Naive thymus-derived CD4-positive, alpha-beta T cell (primary cell): ENCODE measurements at regions of chr19 and their contacts with region 1.

Region 1: GRCh38 chr19:48468775-48469288 is 337 bp upstream of the CYTH2 start:
- DNase-seq: peak; percentile 93 to 100 (median 100)
- ATAC-seq: peak; percentile 93
- H3K4me3 ChIP-seq: peak overlapping the region; percentile 93
- H3K4me3 Mint-ChIP-seq: peak overlapping the region; percentile 81 to 96 (median 92)
- H3K27ac ChIP-seq: peak overlapping the region; percentile 86
- H3K27ac Mint-ChIP-seq: peak overlapping the region; percentile 85 to 96 (median 90)
- H3K4me1 ChIP-seq: peaks cover 7 to 15% of the 10 kb centered on the region in 2 donors
- H3K4me1 Mint-ChIP-seq: peaks cover 0 to 30% (median 18%) of the 10 kb centered on the region in 7 donors
- H3K27me3 ChIP-seq: no peaks in the 10 kb centered on the region
- H3K27me3 Mint-ChIP-seq: no peaks in the 10 kb centered on the region

Region 2: DNA sequence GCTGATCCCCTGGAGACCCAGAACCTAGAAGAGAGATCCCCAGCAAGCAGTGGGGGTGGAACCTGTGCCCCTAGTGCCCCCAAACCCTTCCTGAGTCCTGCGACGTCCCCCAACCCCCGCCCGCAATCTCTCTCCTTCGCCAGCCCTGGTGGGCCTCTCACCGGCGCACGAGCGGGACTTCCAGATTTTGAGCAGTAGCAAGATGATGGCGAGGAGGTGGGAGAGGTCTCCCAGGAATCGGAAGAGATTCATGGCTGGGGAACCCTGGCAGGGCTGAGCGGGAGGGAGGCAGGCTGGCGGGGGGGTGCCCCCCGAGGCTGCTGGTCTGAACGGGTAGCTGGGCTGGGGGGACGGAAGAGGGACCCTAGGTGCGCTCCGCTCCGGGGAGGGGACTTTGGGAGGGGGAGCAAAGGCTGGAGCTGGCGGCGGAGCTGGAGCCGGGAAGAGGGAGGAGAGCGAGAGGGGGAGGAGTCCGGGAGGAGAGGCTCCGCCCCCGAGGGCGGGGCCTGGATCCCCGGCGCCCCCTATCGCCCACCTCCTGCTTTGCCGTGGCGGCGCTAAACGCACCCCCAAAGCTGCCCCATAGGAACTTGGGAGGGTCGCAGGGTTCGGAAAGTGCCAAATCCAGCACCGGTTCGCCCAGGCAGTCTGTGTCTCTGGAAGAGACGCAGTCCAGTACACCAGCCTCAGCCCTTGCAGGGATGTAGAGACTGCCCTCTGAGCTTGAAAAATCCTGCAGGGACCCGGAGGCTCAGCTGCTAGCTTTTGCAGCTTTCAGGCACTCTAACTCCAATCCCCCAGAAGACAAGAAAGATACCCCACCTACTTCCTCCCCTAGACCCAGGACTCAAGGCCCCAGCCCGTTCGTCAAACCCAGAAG is 77.5 kb before region 1 on chr19 and contains the start of gene KDELR1:
- CTCF ChIA-PET with region 1: no interaction called
- POLR2A ChIA-PET with region 1: interaction called, 4 read pairs
- intact Hi-C with region 1: loop called in 1 of 2 experiments (anchors 2 kb)
- DNase-seq: peak; percentile 55 to 89 (median 72)
- ATAC-seq: peak; percentile 92
- H3K4me3 ChIP-seq: peak within 1 kb of the TSS; percentile 96
- H3K4me3 Mint-ChIP-seq: peak within 1 kb of the TSS; percentile 84 to 95 (median 92)
- H3K27ac ChIP-seq: peak within 1 kb of the TSS; percentile 92
- H3K27ac Mint-ChIP-seq: peak within 1 kb of the TSS; percentile 78 to 97 (median 93)
- H3K4me1 ChIP-seq: peaks cover 15 to 32% of the 10 kb centered on the region in 2 donors
- H3K4me1 Mint-ChIP-seq: peaks cover 5 to 46% (median 36%) of the 10 kb centered on the region in 7 donors
- H3K27me3 ChIP-seq: peaks cover 9 to 21% of the 10 kb centered on the region in 2 donors
- H3K27me3 Mint-ChIP-seq: peaks cover 9 to 42% (median 21%) of the 10 kb centered on the region in 5 donors
- total RNA-seq, gene KDELR1: 42.7 to 73.9 (median 52.3) TPM

Region 3: DNA sequence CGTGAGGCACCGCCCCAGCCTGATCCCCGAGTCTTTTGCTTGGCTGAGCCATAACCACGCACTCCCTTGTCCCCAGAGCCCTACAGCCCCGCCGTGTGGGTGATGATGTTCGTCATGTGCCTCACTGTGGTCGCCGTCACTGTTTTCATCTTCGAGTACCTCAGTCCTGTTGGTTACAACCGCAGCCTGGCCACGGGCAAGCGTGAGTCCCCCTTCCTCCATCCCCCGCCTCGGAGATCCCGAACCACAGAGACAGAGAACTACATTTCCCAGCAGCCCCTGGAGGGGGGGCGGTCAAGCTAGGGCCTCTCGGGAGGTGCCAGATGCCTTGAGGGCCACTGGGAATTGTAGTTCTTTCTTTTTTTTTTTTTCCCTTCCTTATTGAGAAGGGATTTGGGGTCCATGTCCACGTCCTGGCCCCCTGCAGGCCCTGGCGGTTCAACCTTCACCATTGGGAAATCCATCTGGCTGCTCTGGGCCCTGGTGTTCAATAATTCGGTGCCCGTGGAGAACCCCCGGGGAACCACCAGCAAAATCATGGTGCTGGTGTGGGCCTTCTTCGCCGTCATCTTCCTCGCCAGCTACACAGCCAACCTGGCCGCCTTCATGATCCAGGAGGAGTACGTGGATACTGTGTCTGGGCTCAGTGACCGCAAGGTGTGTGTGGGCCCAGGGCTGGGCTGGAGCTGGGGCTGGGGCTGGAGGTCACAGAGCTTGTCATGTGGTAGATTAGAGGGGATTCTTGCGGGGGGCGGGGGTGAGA is 49.5 kb before region 1 on chr19:
- CTCF ChIA-PET with region 1: no interaction called
- POLR2A ChIA-PET with region 1: no interaction called
- intact Hi-C with region 1: loop called (anchors 2 kb)
- DNase-seq: peak; percentile 44 to 77 (median 64)
- ATAC-seq: peak; percentile 79
- H3K4me3 ChIP-seq: peak overlapping the region; percentile 15
- H3K4me3 Mint-ChIP-seq: peak overlapping the region; percentile 60 to 90 (median 80)
- H3K27ac ChIP-seq: no peak overlapping the region
- H3K27ac Mint-ChIP-seq: peak overlapping the region in 6 of 9 donors; percentile 6 to 93 (median 74)
- H3K4me1 ChIP-seq: peaks cover 0 to 5% of the 10 kb centered on the region in 2 donors
- H3K4me1 Mint-ChIP-seq: peaks cover 12 to 30% (median 22%) of the 10 kb centered on the region in 7 donors
- H3K27me3 ChIP-seq: no peaks in the 10 kb centered on the region
- H3K27me3 Mint-ChIP-seq: peaks cover 0 to 22% (median 5%) of the 10 kb centered on the region in 5 donors

Region 4: GRCh38 chr19:48492925-48493717 is 24.3 kb after region 1 on chr19:
- CTCF ChIA-PET with region 1: interaction called, 13 read pairs
- POLR2A ChIA-PET with region 1: interaction called, 4 read pairs
- intact Hi-C with region 1: loop called (anchors 1 kb)
- DNase-seq: peak; percentile 69 to 87 (median 78)
- ATAC-seq: peak; percentile 87
- H3K4me3 ChIP-seq: peak overlapping the region; percentile 41
- H3K4me3 Mint-ChIP-seq: peak overlapping the region; percentile 58 to 84 (median 72)
- H3K27ac ChIP-seq: no peak overlapping the region
- H3K27ac Mint-ChIP-seq: peak overlapping the region; percentile 20 to 86 (median 67)
- H3K4me1 ChIP-seq: peaks cover 4 to 25% of the 10 kb centered on the region in 2 donors
- H3K4me1 Mint-ChIP-seq: peaks cover 17 to 51% (median 43%) of the 10 kb centered on the region in 7 donors
- H3K27me3 ChIP-seq: no peaks in the 10 kb centered on the region
- H3K27me3 Mint-ChIP-seq: peaks cover 0 to 57% (median 6%) of the 10 kb centered on the region in 5 donors

Region 5: DNA sequence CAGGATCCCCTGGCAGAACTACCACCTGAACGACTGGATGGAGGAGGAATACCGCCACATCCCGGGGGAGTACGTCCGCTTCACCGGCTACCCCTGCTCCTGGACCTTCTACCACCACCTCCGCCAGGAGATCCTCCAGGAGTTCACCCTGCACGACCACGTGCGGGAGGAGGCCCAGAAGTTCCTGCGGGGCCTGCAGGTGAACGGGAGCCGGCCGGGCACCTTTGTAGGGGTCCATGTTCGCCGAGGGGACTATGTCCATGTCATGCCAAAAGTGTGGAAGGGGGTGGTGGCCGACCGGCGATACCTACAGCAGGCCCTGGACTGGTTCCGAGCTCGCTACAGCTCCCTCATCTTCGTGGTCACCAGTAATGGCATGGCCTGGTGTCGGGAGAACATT is 234.5 kb after region 1 on chr19:
- CTCF ChIA-PET with region 1: no interaction called
- POLR2A ChIA-PET with region 1: no interaction called
- intact Hi-C with region 1: no loop called
- DNase-seq: no peak
- ATAC-seq: no peak
- H3K4me3 ChIP-seq: no peak overlapping the region
- H3K4me3 Mint-ChIP-seq: no peak overlapping the region
- H3K27ac ChIP-seq: no peak overlapping the region
- H3K27ac Mint-ChIP-seq: no peak overlapping the region
- H3K4me1 ChIP-seq: no peaks in the 10 kb centered on the region
- H3K4me1 Mint-ChIP-seq: peaks cover 0 to 5% (median 0%) of the 10 kb centered on the region in 7 donors
- H3K27me3 ChIP-seq: no peaks in the 10 kb centered on the region
- H3K27me3 Mint-ChIP-seq: peaks cover 0 to 5% (median 0%) of the 10 kb centered on the region in 5 donors

Region 6: GRCh38 chr19:48713864-48714758 is 245.3 kb after region 1 on chr19:
- CTCF ChIA-PET with region 1: no interaction called
- POLR2A ChIA-PET with region 1: no interaction called
- intact Hi-C with region 1: loop called in 1 of 2 experiments (anchors 2 kb)
- DNase-seq: peak; percentile 92 to 97 (median 97)
- ATAC-seq: peak; percentile 96
- H3K4me3 ChIP-seq: peak overlapping the region; percentile 95
- H3K4me3 Mint-ChIP-seq: peak overlapping the region; percentile 82 to 92 (median 88)
- H3K27ac ChIP-seq: peak overlapping the region; percentile 79
- H3K27ac Mint-ChIP-seq: peak overlapping the region; percentile 16 to 90 (median 81)
- H3K4me1 ChIP-seq: peaks cover 11 to 12% of the 10 kb centered on the region in 2 donors
- H3K4me1 Mint-ChIP-seq: peaks cover 9 to 24% (median 20%) of the 10 kb centered on the region in 7 donors
- H3K27me3 ChIP-seq: no peaks in the 10 kb centered on the region
- H3K27me3 Mint-ChIP-seq: no peaks in the 10 kb centered on the region

Region 7: GRCh38 chr19:49056010-49056901 is 587.4 kb after region 1 on chr19:
- CTCF ChIA-PET with region 1: no interaction called
- POLR2A ChIA-PET with region 1: no interaction called
- intact Hi-C with region 1: no loop called
- DNase-seq: peak; percentile 33 to 75 (median 45)
- ATAC-seq: peak; percentile 86
- H3K4me3 ChIP-seq: peak overlapping the region; percentile 62
- H3K4me3 Mint-ChIP-seq: peak overlapping the region; percentile 67 to 99 (median 87)
- H3K27ac ChIP-seq: peak overlapping the region; percentile 45
- H3K27ac Mint-ChIP-seq: peak overlapping the region in 2 of 9 donors; percentile 32 to 36
- H3K4me1 ChIP-seq: peaks cover 11 to 14% of the 10 kb centered on the region in 2 donors
- H3K4me1 Mint-ChIP-seq: peaks cover 16 to 19% (median 17%) of the 10 kb centered on the region in 7 donors
- H3K27me3 ChIP-seq: peaks cover 0 to 10% of the 10 kb centered on the region in 2 donors
- H3K27me3 Mint-ChIP-seq: peaks cover 16 to 59% (median 30%) of the 10 kb centered on the region in 5 donors